ENCODE measurements at regions of chr3 and their contacts with region 1.

Region 1: DNA sequence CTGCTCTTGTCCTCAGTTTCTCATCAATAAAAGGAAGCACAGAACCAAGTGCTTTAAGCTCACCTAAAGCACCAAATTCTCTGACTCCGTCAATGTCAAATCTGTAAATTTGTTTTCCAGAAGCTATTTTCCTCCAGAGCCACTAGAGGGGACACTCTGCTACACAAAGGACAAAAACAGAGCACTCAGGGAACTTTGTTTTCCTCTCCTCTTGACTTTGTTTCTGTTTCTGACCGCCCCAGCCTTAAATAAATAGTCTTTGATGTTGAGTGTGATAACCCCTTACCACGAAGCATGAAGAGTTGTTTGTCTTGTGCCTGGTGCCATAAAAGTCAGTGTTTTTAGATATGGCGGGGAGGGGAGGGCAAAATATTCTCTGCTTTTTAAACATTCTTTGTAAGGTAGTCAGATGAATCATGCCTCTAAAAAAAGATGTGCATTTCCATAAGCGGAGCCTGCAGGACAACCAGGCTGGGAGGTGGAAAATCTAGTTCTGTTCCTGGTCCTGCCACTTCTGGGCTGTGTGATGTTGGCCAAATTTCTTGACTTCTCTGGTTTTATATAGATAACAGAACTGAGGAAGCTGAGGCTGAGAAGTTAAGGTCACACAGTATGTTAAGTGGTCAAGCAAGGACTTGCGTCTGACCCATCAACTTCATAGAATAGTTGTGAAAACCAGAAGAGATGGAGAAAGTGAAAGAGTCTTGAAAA is 7.3 kb upstream of the ZBTB38 start:
- DNase-seq: peak in 1 of 2 donors; percentile 34
- H3K4me3 ChIP-seq: peak overlapping the region in 1 of 2 donors; percentile 23
- H3K27ac ChIP-seq: peak overlapping the region; percentile 68 to 75
- H3K4me1 ChIP-seq: peaks cover 0 to 4% of the 10 kb centered on the region in 2 donors
- H3K27me3 ChIP-seq: no peaks in the 10 kb centered on the region
- CTCF ChIP-seq: peak; percentile 86 to 93 (median 87)
- POLR2A ChIP-seq: no peak

Region 2: DNA sequence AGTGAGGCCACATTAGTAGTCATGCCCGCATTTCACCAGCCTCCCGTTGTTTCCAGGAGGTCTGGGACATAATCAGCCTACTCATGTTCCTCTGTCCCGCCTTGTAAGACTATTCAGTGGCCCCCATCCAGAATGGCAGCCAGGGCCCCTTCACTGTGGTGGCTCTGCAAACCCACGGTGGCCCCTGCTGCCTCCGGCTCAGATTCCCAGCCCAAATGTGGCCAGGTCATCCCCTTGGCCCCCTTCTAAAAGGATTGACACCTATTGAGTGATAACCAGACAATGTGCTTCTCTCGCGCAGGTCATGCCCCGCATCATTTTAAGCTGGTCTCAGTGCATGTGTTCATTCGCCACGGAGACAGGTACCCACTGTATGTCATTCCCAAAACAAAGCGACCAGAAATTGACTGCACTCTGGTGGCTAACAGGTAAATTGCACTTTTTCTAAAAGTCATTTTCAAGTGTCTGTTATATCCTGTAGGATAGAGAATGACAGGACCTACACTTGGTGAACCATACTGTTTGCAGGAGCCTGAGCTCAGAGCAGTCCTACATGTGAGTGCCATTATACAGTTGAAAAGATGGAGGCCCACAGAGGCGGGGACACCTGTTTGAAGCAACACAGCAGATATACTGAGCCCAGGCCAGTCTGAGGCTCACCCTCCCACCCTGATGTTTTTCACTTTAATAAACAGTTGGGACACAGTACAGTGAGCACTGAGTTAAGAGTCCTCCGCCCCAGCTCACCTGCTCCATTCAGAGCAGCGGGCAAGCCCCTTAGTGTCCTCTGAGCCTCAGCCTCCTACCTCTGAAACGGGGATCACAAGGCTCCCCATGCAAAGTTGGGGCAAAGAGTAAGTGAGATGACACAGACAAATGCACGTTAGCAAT is 81.7 kb before region 1 on chr3:
- intact Hi-C with region 1: no loop called
- DNase-seq: no peak
- H3K4me3 ChIP-seq: no peak overlapping the region
- H3K27ac ChIP-seq: peak overlapping the region; percentile 62 to 76
- H3K4me1 ChIP-seq: no peaks in the 10 kb centered on the region
- H3K27me3 ChIP-seq: no peaks in the 10 kb centered on the region
- CTCF ChIP-seq: peak; percentile 21 to 52 (median 40)
- POLR2A ChIP-seq: no peak

Region 3: DNA sequence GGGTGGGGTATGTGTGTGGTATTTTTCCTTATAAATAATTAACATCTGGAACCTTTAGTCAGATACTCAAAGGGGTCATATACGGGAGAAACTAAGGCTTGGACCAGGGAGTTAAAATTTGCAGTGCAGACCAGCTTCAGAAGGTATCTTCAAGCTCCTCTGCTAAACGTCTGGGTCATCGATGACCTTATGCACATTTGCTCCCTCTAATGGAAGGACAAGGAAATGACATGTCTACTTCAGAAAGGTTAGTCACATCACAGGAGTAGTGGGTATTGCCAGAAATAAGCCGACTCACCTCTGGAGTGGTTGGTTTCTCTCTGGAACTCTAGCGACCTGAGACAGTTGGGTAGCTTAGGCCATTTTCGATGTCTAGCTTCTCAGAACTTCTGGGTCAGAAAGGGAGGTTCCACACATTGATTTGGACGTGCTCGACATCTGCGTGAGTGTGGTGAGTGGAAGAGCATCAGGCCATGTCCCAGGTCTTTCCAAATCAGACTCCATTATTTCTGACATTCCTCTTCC is 93.9 kb after region 1 on chr3:
- intact Hi-C with region 1: loop called (anchors 5 kb)
- DNase-seq: no peak
- H3K4me3 ChIP-seq: no peak overlapping the region
- H3K27ac ChIP-seq: no peak overlapping the region
- H3K4me1 ChIP-seq: no peaks in the 10 kb centered on the region
- H3K27me3 ChIP-seq: no peaks in the 10 kb centered on the region
- CTCF ChIP-seq: peak; percentile 50 to 72 (median 70)
- POLR2A ChIP-seq: no peak

Region 4: DNA sequence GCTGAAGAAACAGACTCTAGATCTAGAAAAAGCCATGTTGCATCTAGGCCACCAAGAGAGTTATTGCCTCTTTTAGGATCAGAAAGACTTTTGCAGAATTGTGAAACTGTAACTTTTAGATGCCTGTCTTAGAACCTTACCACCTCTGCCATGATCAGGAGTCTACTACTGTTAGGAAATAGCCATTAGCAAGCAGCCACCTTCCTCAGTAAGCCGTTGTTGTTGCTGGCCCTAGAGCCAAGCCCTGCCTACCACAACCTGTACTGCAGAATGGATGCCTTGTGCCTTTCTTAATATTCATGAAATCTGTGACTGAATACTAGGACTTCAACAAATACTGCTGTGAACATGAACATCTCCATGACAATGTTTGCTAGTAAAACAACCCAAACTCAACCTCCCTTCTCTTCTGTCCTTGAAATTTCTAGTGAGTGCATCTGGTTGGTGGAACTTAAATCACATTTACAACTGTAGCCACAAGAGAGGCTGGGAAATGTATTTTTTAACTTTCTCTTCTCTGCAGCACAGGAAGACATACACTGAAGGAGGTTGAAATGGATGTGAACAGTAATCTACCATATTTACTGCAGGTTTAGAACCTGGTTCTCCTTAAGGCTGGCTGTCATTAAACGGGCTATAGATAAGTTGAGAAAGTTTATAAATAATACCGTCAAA is 146.5 kb after region 1 on chr3:
- intact Hi-C with region 1: no loop called
- DNase-seq: no peak
- H3K4me3 ChIP-seq: no peak overlapping the region
- H3K27ac ChIP-seq: no peak overlapping the region
- H3K4me1 ChIP-seq: no peaks in the 10 kb centered on the region
- H3K27me3 ChIP-seq: no peaks in the 10 kb centered on the region
- CTCF ChIP-seq: no peak
- POLR2A ChIP-seq: no peak

Measured in uterus (tissue), 4 donors.